CD8-positive, alpha-beta T cell (primary cell): ENCODE measurements at regions of chr19 and their contacts with region 1.

Region 1: GRCh38 chr19:5803752-5804515 is 933 bp upstream of the NRTN start:
- DNase-seq: peak; percentile 80 to 96 (median 92)
- ATAC-seq: peak; percentile 97
- H3K4me3 ChIP-seq: peak overlapping the region; percentile 41 to 61
- H3K4me3 Mint-ChIP-seq: peak overlapping the region; percentile 75
- H3K27ac ChIP-seq: no peak overlapping the region
- H3K27ac Mint-ChIP-seq: no peak overlapping the region
- H3K4me1 ChIP-seq: peaks cover 34% of the 10 kb centered on the region
- H3K4me1 Mint-ChIP-seq: peaks cover 23% of the 10 kb centered on the region
- H3K27me3 ChIP-seq: peaks cover 0 to 35% of the 10 kb centered on the region in 2 experiments
- H3K27me3 Mint-ChIP-seq: peaks cover 18% of the 10 kb centered on the region
- CTCF ChIP-seq: peak; percentile 93

Region 2: GRCh38 chr19:5624018-5624663 is 179.8 kb before region 1 on chr19:
- CTCF ChIA-PET with region 1: no interaction called
- POLR2A ChIA-PET with region 1: no interaction called
- intact Hi-C with region 1: no loop called
- DNase-seq: peak in 7 of 9 experiments; percentile 15 to 61 (median 41)
- ATAC-seq: no peak
- H3K4me3 ChIP-seq: peak overlapping the region; percentile 78 to 91
- H3K4me3 Mint-ChIP-seq: peak overlapping the region; percentile 100
- H3K27ac ChIP-seq: peak overlapping the region; percentile 90 to 94
- H3K27ac Mint-ChIP-seq: peak overlapping the region; percentile 90
- H3K4me1 ChIP-seq: peaks cover 78% of the 10 kb centered on the region
- H3K4me1 Mint-ChIP-seq: peaks cover 67% of the 10 kb centered on the region
- H3K27me3 ChIP-seq: no peaks in the 10 kb centered on the region
- H3K27me3 Mint-ChIP-seq: no peaks in the 10 kb centered on the region
- CTCF ChIP-seq: no peak

Region 3: GRCh38 chr19:5814123-5814851 is 10.4 kb after region 1 on chr19:
- CTCF ChIA-PET with region 1: interaction called, 10 read pairs
- POLR2A ChIA-PET with region 1: no interaction called
- intact Hi-C with region 1: no loop called
- DNase-seq: no peak
- ATAC-seq: no peak
- H3K4me3 ChIP-seq: no peak overlapping the region
- H3K4me3 Mint-ChIP-seq: no peak overlapping the region
- H3K27ac ChIP-seq: no peak overlapping the region
- H3K27ac Mint-ChIP-seq: no peak overlapping the region
- H3K4me1 ChIP-seq: no peaks in the 10 kb centered on the region
- H3K4me1 Mint-ChIP-seq: no peaks in the 10 kb centered on the region
- H3K27me3 ChIP-seq: no peaks in the 10 kb centered on the region
- H3K27me3 Mint-ChIP-seq: peaks cover 4% of the 10 kb centered on the region
- CTCF ChIP-seq: no peak

Region 4: GRCh38 chr19:5827891-5828660 is 24.1 kb after region 1 on chr19:
- CTCF ChIA-PET with region 1: interaction called, 16 read pairs
- POLR2A ChIA-PET with region 1: interaction called, 8 read pairs
- intact Hi-C with region 1: loop called (anchors 1 kb)
- DNase-seq: peak; percentile 82 to 98 (median 90)
- ATAC-seq: peak; percentile 82
- H3K4me3 ChIP-seq: peak overlapping the region; percentile 56 to 70
- H3K4me3 Mint-ChIP-seq: peak overlapping the region; percentile 97
- H3K27ac ChIP-seq: peak overlapping the region; percentile 62 to 70
- H3K27ac Mint-ChIP-seq: peak overlapping the region; percentile 98
- H3K4me1 ChIP-seq: peaks cover 23% of the 10 kb centered on the region
- H3K4me1 Mint-ChIP-seq: peaks cover 15% of the 10 kb centered on the region
- H3K27me3 ChIP-seq: peaks cover 0 to 4% of the 10 kb centered on the region in 2 experiments
- H3K27me3 Mint-ChIP-seq: peaks cover 2% of the 10 kb centered on the region
- CTCF ChIP-seq: no peak

Region 5: GRCh38 chr19:5891938-5892771 is 88.2 kb after region 1 on chr19:
- CTCF ChIA-PET with region 1: interaction called, 9 read pairs
- POLR2A ChIA-PET with region 1: no interaction called
- intact Hi-C with region 1: loop called (anchors 1 kb)
- DNase-seq: peak in 1 of 9 experiments; percentile 37
- ATAC-seq: peak; percentile 40
- H3K4me3 ChIP-seq: no peak overlapping the region
- H3K4me3 Mint-ChIP-seq: no peak overlapping the region
- H3K27ac ChIP-seq: no peak overlapping the region
- H3K27ac Mint-ChIP-seq: no peak overlapping the region
- H3K4me1 ChIP-seq: peaks cover 9% of the 10 kb centered on the region
- H3K4me1 Mint-ChIP-seq: peaks cover 3% of the 10 kb centered on the region
- H3K27me3 ChIP-seq: no peaks in the 10 kb centered on the region
- H3K27me3 Mint-ChIP-seq: peaks cover 9% of the 10 kb centered on the region
- CTCF ChIP-seq: no peak

Region 6: GRCh38 chr19:5987077-5987818 is 183.3 kb after region 1 on chr19:
- CTCF ChIA-PET with region 1: interaction called, 10 read pairs
- POLR2A ChIA-PET with region 1: no interaction called
- intact Hi-C with region 1: no loop called
- DNase-seq: peak; percentile 41 to 85 (median 74)
- ATAC-seq: peak; percentile 71
- H3K4me3 ChIP-seq: peak overlapping the region; percentile 36 to 41
- H3K4me3 Mint-ChIP-seq: peak overlapping the region; percentile 79
- H3K27ac ChIP-seq: no peak overlapping the region
- H3K27ac Mint-ChIP-seq: no peak overlapping the region
- H3K4me1 ChIP-seq: peaks cover 5% of the 10 kb centered on the region
- H3K4me1 Mint-ChIP-seq: peaks cover 26% of the 10 kb centered on the region
- H3K27me3 ChIP-seq: no peaks in the 10 kb centered on the region
- H3K27me3 Mint-ChIP-seq: no peaks in the 10 kb centered on the region
- CTCF ChIP-seq: peak; percentile 93